ENCODE measurements at regions of chr6 and their contacts with region 1.

Region 1: GRCh38 chr6:3742426-3743344 is 8.8 kb downstream of the PXDC1 start:
- DNase-seq: peak; percentile 81 to 89 (median 88)
- ATAC-seq: peak; percentile 92
- H3K4me3 ChIP-seq: no peak overlapping the region
- H3K27ac ChIP-seq: no peak overlapping the region
- H3K4me1 ChIP-seq: peaks cover 3 to 6% of the 10 kb centered on the region in 2 experiments; a peak in 2 of 5 replicates
- H3K27me3 ChIP-seq: peaks cover 31 to 81% of the 10 kb centered on the region in 2 experiments; a peak in 4 of 5 replicates
- CTCF ChIP-seq: peak; percentile 91 to 97 (median 96)
- EP300 ChIP-seq: no peak
- POLR2A ChIP-seq: no peak
- RAD21 ChIP-seq: peak; percentile 96 to 97

Region 2: DNA sequence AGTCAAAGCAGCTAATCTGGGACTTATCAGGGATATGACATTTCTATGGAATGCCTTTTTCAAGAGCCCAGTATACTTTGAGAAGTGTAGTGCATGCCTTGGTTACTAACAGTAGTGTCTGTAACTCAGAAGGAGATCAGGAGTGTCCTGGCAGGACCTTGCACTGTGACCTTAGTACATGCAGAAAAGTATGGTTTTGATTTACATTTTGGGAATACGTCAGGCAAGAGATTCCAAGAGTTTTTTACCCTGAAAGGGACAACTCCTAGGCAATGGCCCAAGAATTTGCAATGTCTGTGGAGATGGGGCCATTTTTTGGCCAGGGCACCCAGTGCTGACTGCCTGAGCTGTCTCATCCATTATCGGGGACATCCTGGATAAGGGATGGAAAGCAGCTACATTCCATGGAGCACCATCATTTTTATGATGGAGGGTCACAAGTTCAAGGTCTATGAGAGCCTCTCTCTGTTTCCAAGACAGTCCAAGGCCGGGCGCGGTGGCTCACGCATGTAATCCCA is 186.7 kb after region 1 on chr6:
- CTCF ChIA-PET with region 1: interaction called, 16 read pairs
- POLR2A ChIA-PET with region 1: no interaction called
- in situ Hi-C with region 1: loop called (anchors 5 kb)
- intact Hi-C with region 1: loop called (anchors 1 kb)
- DNase-seq: no peak
- ATAC-seq: no peak
- H3K4me3 ChIP-seq: no peak overlapping the region
- H3K27ac ChIP-seq: no peak overlapping the region
- H3K4me1 ChIP-seq: peaks cover 0 to 1% of the 10 kb centered on the region in 2 experiments; a peak in 1 of 5 replicates
- H3K27me3 ChIP-seq: peaks cover 2 to 7% of the 10 kb centered on the region in 2 experiments; a peak in 4 of 5 replicates
- CTCF ChIP-seq: no peak
- EP300 ChIP-seq: no peak
- POLR2A ChIP-seq: no peak
- RAD21 ChIP-seq: no peak

Region 3: DNA sequence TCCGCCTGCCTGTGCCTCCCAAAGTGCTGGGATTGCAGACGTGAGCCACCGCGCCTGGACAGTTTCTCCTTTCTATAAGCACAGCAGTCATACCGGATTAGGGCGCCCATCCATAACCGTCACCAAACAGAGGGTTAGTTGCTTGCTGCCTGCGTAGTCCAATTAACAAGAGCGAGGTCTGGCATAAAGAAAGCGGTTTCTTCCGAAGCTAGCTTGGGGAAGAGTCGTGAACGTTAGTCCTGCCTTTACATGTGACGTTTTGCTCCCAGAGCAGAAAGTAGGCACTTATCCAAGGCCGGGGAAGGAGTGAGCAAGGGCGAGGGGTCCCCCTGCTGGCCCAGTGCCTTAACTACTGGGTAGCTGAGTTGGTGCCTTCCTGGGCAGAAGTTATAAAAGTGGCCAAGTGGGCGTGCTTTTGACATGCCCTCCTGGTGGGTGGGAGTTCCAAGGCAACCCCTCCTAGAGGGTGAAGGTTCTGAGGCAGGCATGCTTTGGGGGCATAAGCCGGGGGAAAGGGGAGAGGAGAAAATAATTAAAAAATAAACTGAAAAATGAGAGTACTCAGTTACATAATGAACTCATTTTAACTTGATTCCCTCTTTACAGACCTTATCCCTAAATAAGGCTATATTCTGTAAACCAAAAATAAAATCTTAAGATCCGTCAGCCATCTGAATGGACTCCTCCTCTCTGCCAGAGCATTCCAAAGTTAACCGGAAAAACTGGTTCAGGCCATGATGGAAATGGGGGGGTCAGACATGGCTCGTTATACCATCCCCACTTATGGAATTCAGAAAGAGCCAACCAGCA is 248.2 kb after region 1 on chr6:
- CTCF ChIA-PET with region 1: interaction called, 22 read pairs
- POLR2A ChIA-PET with region 1: no interaction called
- in situ Hi-C with region 1: loop called (anchors 5 kb)
- intact Hi-C with region 1: loop called (anchors 5 kb)
- DNase-seq: peak; percentile 82 to 88 (median 86)
- ATAC-seq: peak; percentile 99
- H3K4me3 ChIP-seq: no peak overlapping the region
- H3K27ac ChIP-seq: no peak overlapping the region
- H3K4me1 ChIP-seq: no peaks in the 10 kb centered on the region; a peak in 1 of 5 replicates
- H3K27me3 ChIP-seq: no peaks in the 10 kb centered on the region
- CTCF ChIP-seq: peak; percentile 89 to 96 (median 94)
- EP300 ChIP-seq: no peak
- POLR2A ChIP-seq: no peak
- RAD21 ChIP-seq: peak; percentile 70 to 87

Region 4: DNA sequence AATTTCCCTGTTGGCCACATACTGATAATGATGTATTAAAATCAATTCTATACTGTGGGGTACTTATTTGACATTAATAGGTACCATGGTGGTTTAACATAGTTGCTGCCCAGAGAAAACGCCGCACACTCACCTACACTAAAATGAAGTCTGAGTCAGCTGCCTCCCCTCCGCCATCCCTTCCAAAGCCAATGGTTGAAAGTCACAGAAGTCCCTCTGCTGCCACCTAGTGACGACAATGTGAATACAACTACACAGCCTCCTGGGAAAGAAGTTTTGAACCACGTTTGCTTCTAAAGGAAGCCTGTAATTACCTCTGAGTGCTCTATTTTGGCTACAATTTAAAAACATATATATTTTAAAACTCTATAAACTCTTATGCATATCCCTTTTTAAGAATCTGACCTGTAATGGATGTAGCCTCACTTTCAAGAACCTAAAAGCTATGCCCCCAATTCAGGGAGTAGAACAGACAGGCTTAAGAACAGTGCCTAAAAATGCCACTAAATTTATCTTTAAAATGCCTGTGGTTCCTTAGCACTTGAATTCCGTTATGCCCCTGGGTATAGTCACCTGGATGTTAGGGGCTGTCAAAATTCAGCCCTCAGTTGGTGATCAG is 413.3 kb after region 1 on chr6:
- CTCF ChIA-PET with region 1: interaction called, 6 read pairs
- POLR2A ChIA-PET with region 1: no interaction called
- in situ Hi-C with region 1: no loop called
- intact Hi-C with region 1: loop called (anchors 1 kb)
- DNase-seq: peak; percentile 82 to 92 (median 85)
- ATAC-seq: peak; percentile 96
- H3K4me3 ChIP-seq: no peak overlapping the region
- H3K27ac ChIP-seq: no peak overlapping the region
- H3K4me1 ChIP-seq: peaks cover 0 to 2% of the 10 kb centered on the region in 2 experiments; a peak in 1 of 5 replicates
- H3K27me3 ChIP-seq: peaks cover 22 to 41% of the 10 kb centered on the region in 2 experiments; a peak in 4 of 5 replicates
- CTCF ChIP-seq: peak; percentile 86 to 94 (median 90)
- EP300 ChIP-seq: no peak
- POLR2A ChIP-seq: no peak
- RAD21 ChIP-seq: peak; percentile 91 to 95

Region 5: DNA sequence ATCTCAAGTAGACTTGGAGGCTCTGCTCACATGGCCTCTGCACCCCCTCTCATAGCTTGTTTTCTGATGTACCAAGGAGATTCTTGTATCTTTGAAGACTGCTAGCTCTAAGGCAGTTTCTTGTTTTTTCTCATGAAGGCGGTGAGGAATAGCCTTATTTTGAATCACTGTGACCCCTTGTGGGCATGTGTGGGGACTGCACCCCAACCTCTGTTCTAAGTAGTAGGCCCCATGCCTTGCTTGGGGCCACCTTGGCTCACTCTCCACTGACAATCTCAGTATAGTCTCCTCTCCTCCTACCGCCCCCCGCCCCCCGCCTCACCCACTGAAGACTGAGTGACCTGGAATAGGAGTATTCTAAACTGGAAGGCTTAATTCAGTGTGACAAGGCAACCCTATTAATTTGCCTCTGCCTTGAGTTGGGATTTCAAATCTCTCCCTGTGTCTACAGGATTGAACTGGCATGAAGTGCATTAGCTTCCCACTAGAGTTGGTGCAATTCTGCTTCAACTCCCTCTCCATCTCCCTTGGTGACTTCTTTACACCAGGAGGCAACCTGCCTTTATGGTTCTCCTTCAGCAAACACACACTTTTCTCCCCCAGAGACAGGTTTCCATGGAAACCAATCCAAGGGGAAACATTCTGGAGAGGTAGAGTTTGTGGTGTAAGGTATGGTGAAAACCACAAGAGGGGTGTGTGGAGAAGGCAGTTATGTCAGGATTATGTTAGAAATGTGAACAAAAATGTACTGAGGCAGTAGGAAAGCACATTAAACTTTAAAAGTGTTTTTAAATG is 468.1 kb after region 1 on chr6:
- CTCF ChIA-PET with region 1: interaction called, 3 read pairs
- POLR2A ChIA-PET with region 1: no interaction called
- in situ Hi-C with region 1: loop called (anchors 5 kb)
- intact Hi-C with region 1: loop called (anchors 1 kb)
- DNase-seq: peak; percentile 65 to 72 (median 68)
- ATAC-seq: peak; percentile 97
- H3K4me3 ChIP-seq: no peak overlapping the region
- H3K27ac ChIP-seq: no peak overlapping the region
- H3K4me1 ChIP-seq: no peaks in the 10 kb centered on the region
- H3K27me3 ChIP-seq: peaks cover 0 to under 1% of the 10 kb centered on the region in 2 experiments; a peak in 1 of 5 replicates
- CTCF ChIP-seq: peak; percentile 73 to 92 (median 85)
- EP300 ChIP-seq: no peak
- POLR2A ChIP-seq: no peak
- RAD21 ChIP-seq: peak; percentile 74 to 90

Measured in K562 (cell line).